Posterior cingulate gyrus (tissue), 11 donors: ENCODE measurements at regions of chr12 and their contacts with region 1.

Region 1: DNA sequence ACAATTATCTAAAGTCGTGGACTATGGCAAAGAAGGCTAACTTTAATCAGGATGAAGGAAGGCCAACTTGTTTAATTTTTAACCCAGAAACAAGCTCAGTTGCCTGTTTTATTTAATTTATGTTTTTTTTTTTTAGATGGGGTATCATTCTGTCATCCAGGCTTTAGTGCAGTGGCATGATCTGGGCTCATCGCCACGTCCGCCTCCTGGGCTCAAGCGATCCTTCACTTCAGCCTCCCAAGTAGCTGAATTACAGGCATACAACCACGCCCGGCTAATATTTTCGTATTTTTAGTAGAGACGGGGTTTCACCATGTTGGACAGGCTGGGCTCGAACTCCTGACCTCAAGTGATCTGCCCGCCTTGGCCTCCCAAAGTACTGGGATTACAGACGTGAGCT is 19.7 kb downstream of the NUDT4 start:
- DNase-seq: no peak

Region 2: DNA sequence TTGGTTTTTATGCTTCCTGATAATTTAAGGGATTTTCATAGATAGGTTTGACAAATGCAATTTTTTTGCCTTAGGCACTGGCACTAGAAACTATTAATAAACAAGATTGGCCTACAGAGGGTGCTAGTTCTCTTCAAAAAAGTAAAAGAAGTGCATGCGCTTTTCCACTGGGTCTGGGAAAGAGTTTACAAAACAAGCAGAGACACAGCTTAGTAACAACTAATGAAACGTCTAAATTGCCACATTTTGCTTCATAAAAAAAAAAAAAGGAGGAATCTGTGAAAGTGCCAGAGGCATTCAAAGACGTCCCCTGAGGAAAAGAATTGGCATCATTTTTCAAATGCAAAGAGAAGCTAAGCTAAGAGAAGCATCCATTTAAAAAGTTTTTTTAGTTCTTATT is 410.1 kb before region 1 on chr12:
- intact Hi-C with region 1: loop called (anchors 2 kb)
- DNase-seq: no peak

Region 3: DNA sequence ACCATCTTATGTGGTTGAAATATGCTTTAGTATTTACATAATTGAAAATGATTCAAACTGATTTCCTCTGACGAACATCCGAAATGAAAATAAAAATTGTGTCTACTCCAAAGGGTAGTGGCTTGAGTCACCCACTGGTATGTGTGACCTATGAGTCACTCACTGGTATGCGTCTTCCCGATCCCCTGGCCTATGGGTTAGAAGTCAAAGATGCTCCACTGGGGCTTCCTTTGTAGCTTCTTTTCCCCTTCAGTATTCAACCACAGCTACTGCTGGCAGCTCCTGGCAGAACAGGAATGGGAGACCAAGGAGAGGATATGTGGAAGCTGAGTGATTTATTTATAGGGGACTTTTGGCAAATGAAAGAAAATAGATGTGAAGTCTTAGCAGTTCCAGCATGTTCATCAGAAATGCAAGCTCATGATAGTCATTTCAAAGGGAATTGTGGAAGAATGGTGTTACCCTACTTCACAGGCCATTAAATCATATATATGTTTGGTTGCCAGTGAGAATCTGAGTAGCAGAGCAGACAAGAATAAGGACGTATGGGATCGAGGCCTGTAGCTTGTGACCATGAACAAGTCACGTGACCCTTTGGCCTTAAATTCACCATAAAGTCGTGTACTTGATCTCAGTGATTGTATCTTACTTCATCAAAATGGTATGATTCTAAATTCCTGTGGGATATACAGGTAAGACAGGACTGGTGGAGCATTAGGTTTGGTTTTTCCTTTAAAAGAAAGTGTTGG is 388.0 kb after region 1 on chr12:
- intact Hi-C with region 1: no loop called
- DNase-seq: no peak